Head of caudate nucleus (tissue), 42 donors: ENCODE measurements at regions of chr19 and their contacts with region 1.

Region 1: GRCh38 chr19:40777937-40778705 is at the start of gene RAB4B:
- DNase-seq: peak; percentile 99 to 100 (median 100)

Region 2: DNA sequence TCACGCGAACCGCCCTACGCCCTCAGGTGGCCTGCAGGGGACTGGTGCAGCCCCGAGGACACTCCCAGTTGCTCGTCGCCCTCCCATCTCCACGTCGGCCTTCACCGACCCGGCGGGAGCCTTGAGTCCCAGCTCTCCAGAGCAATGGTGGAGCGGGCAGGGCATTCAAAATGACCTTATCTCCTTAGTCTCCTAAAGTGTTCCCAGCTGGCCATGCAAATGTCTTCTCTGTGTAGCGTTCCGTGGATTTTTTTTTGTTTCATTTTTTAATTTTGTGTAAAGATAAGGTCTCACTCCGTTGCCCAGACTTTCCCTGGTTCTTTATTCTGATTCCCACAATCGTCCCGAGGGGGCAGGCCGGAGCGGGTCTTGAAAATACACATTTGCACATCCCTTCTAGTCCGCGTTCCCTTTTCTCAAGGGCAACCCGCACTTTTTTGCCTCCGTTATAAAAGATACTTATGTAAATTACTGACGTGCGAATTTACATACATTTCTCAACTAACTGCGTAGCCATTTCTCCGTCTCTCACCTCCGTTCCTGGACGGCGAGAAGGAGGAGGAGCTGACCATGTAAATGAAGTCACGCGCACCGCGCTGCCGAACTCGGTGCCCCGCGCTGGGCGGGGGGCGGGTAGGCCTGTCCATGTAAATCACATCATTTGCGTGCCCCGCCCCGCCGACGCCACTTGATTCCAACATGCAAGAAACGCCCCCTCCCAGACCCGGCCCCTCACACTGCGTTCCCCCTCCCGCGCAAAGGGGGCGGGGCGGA is 20.3 kb after region 1 on chr19:
- intact Hi-C with region 1: loop called (anchors 1 kb)
- DNase-seq: peak; percentile 100